Breast epithelium (tissue), 4 donors: ENCODE measurements at regions of chr6 and their contacts with region 1.

Region 1: DNA sequence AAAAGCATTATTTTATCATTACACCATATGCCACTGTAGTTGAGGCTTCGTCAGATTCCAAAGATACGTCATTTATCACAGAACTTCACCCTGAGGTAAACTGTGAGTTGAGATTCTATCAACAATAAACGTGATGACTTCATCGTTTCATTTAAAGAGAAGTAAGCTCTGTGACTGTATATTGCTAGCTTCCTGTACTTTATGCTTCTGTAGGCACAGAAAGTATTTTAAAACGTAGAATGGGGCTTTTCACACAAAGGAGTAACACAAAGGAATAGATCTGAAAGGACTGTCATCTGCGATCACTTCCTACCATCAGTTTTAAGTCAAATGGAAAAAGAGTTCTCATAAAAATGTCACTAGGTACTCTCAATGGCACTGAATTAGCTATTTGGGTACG is 234.4 kb upstream of the MCHR2 start:
- DNase-seq: no peak
- H3K4me3 ChIP-seq: peak overlapping the region; percentile 40 to 67 (median 50)
- H3K27ac ChIP-seq: peak overlapping the region; percentile 41 to 43
- H3K4me1 ChIP-seq: no peaks in the 10 kb centered on the region
- H3K27me3 ChIP-seq: no peaks in the 10 kb centered on the region
- CTCF ChIP-seq: no peak
- POLR2A ChIP-seq: no peak

Region 2: GRCh38 chr6:100209323-100210136 is 18.9 kb before region 1 on chr6:
- intact Hi-C with region 1: loop called (anchors 1 kb)
- DNase-seq: no peak
- H3K4me3 ChIP-seq: no peak overlapping the region
- H3K27ac ChIP-seq: no peak overlapping the region
- H3K4me1 ChIP-seq: no peaks in the 10 kb centered on the region
- H3K27me3 ChIP-seq: no peaks in the 10 kb centered on the region
- CTCF ChIP-seq: no peak
- POLR2A ChIP-seq: no peak

Region 3: GRCh38 chr6:100217225-100218012 is 11.0 kb before region 1 on chr6:
- intact Hi-C with region 1: loop called (anchors 1 kb)
- DNase-seq: no peak
- H3K4me3 ChIP-seq: no peak overlapping the region
- H3K27ac ChIP-seq: no peak overlapping the region
- H3K4me1 ChIP-seq: no peaks in the 10 kb centered on the region
- H3K27me3 ChIP-seq: no peaks in the 10 kb centered on the region
- CTCF ChIP-seq: no peak
- POLR2A ChIP-seq: no peak

Region 4: DNA sequence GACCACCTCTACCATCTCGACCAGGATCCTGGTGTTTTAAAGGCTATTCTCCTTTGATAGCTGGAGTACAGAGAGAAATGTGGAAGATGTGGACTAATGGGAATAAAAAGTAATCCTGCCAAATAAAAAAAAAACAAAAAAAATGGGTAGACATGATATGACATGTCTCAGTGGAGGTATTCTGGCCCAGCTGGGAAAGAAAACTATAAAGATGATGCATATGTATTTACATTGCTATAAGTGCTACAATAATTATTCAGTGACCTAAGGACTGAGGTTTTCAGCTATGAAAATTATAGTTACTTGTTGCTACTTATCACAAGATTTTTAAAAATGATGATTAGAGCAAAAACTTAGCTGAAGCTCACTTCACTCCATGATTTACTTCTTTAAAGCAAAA is 135.2 kb after region 1 on chr6:
- intact Hi-C with region 1: no loop called
- DNase-seq: no peak
- H3K4me3 ChIP-seq: no peak overlapping the region
- H3K27ac ChIP-seq: no peak overlapping the region
- H3K4me1 ChIP-seq: no peaks in the 10 kb centered on the region
- H3K27me3 ChIP-seq: no peaks in the 10 kb centered on the region
- CTCF ChIP-seq: no peak
- POLR2A ChIP-seq: no peak